ENCODE measurements at regions of chr13 and their contacts with region 1.

Region 1: DNA sequence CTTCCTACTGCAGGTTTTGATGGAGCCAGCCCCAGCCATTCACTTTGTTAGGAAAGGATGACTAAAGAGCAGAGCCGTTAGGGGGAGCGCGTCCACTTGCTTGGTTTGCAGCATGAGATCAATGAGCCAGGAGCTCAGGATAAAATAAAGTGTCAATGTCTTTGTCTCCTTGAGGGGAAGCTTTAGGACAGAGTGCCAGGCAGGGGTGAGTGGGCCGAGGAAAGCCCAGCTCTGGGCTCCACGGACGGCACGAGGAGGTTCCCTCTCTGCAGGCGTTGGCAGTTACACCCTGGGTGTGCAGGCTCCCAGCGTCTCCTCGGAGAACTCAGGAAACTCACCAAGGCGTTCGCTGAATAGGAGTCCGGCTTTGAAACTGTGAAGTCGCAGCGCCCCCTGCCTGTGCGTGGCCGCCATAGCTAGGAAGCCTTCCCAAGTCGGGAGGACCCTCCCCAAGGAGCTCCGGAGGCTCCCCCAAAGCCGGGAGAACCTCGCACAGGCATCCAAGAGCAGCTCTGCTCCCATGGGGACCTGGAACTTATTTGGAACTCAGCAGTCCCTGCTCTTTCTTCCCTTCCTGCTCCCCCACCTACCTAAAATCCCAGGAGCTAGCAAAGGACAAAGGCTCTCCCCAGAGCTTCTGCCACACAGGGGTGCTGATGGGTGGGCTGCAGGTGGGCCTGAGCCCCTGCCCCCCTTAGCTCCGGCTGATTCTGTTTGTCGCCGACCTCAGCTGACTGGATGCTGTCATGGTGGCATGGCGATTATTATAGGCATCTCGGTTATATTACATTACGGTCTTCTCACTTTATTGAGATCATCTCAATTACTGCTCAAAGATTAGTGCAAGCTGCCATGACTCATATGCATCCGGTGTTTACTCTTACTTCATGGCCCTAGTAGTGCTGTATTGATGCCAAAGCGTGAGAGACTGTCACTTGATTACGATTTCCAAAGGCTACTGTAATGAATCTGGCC is 34.4 kb downstream of the GSX1 start:
- DNase-seq: peak; percentile 78 to 99
- H3K4me3 ChIP-seq: peak overlapping the region in 3 of 4 experiments; percentile 31 to 52 (median 40); a peak in 4 of 8 replicates
- H3K27ac ChIP-seq: no peak overlapping the region
- H3K4me1 ChIP-seq: peaks cover 7 to 19% (median 11%) of the 10 kb centered on the region in 4 experiments; a peak in 6 of 7 replicates
- H3K27me3 ChIP-seq: peaks cover 47 to 91% (median 78%) of the 10 kb centered on the region in 4 experiments
- CTCF ChIP-seq: peak; percentile 77 to 96 (median 95)
- EP300 ChIP-seq: no peak
- POLR2A ChIP-seq: no peak
- RAD21 ChIP-seq: peak; percentile 94 to 96

Region 2: GRCh38 chr13:27264181-27264580 is 562.5 kb before region 1 on chr13:
- CTCF ChIA-PET with region 1: no interaction called
- POLR2A ChIA-PET with region 1: no interaction called
- DNase-seq: no peak
- H3K4me3 ChIP-seq: no peak overlapping the region
- H3K27ac ChIP-seq: no peak overlapping the region
- H3K4me1 ChIP-seq: peaks cover 0 to 2% (median under 1%) of the 10 kb centered on the region in 4 experiments; a peak in 5 of 7 replicates
- H3K27me3 ChIP-seq: peaks cover 0 to 1% (median 0%) of the 10 kb centered on the region in 4 experiments; a peak in 3 of 7 replicates
- CTCF ChIP-seq: no peak
- EP300 ChIP-seq: no peak
- POLR2A ChIP-seq: no peak
- RAD21 ChIP-seq: no peak

Region 3: DNA sequence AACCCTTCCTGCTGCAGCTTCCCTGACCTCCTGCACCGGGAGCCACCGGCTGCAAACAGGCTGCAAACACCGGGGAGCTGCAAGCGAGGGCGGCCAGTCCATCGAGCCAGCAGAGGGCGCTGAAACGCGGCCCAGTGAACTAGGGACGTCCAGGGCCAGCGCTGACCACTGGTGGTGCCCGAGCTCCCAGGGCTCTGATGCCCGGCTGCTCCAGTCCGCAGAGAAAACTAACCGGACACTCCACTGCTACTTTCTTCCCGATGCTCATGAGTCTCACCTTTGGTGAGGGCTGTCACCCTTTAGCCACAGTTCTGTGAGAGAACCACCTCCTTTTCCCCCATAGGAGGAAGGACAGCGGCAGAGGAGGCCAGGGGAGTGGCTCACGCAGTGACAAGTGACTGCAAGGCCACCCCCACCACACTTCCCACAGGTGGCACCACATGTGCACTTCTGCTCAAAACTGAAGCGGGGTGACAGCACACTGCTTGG is 293.5 kb before region 1 on chr13:
- CTCF ChIA-PET with region 1: interaction called, 16 read pairs
- POLR2A ChIA-PET with region 1: no interaction called
- DNase-seq: peak; percentile 21 to 94
- H3K4me3 ChIP-seq: no peak overlapping the region
- H3K27ac ChIP-seq: no peak overlapping the region
- H3K4me1 ChIP-seq: no peaks in the 10 kb centered on the region
- H3K27me3 ChIP-seq: no peaks in the 10 kb centered on the region
- CTCF ChIP-seq: peak; percentile 94 to 99 (median 97)
- EP300 ChIP-seq: no peak
- POLR2A ChIP-seq: no peak
- RAD21 ChIP-seq: peak; percentile 76 to 88

Region 4: GRCh38 chr13:27728271-27728670 is 98.4 kb before region 1 on chr13:
- CTCF ChIA-PET with region 1: interaction called, 64 read pairs
- POLR2A ChIA-PET with region 1: no interaction called
- DNase-seq: no peak
- H3K4me3 ChIP-seq: no peak overlapping the region
- H3K27ac ChIP-seq: no peak overlapping the region
- H3K4me1 ChIP-seq: no peaks in the 10 kb centered on the region
- H3K27me3 ChIP-seq: no peaks in the 10 kb centered on the region
- CTCF ChIP-seq: peak; percentile 30 to 44 (median 42); a peak in 3 of 4 replicates
- EP300 ChIP-seq: no peak
- POLR2A ChIP-seq: no peak
- RAD21 ChIP-seq: peak; percentile 63 to 67

Region 5: GRCh38 chr13:27783111-27783510 is 43.6 kb before region 1 on chr13:
- CTCF ChIA-PET with region 1: interaction called, 154 read pairs
- POLR2A ChIA-PET with region 1: no interaction called
- DNase-seq: no peak
- H3K4me3 ChIP-seq: no peak overlapping the region
- H3K27ac ChIP-seq: no peak overlapping the region
- H3K4me1 ChIP-seq: peaks cover 0 to 7% (median 1%) of the 10 kb centered on the region in 4 experiments; a peak in 5 of 7 replicates
- H3K27me3 ChIP-seq: peaks cover 9 to 25% (median 12%) of the 10 kb centered on the region in 4 experiments
- CTCF ChIP-seq: peak; percentile 42 to 66 (median 64)
- EP300 ChIP-seq: no peak
- POLR2A ChIP-seq: no peak
- RAD21 ChIP-seq: peak; percentile 64 to 73

Region 6: DNA sequence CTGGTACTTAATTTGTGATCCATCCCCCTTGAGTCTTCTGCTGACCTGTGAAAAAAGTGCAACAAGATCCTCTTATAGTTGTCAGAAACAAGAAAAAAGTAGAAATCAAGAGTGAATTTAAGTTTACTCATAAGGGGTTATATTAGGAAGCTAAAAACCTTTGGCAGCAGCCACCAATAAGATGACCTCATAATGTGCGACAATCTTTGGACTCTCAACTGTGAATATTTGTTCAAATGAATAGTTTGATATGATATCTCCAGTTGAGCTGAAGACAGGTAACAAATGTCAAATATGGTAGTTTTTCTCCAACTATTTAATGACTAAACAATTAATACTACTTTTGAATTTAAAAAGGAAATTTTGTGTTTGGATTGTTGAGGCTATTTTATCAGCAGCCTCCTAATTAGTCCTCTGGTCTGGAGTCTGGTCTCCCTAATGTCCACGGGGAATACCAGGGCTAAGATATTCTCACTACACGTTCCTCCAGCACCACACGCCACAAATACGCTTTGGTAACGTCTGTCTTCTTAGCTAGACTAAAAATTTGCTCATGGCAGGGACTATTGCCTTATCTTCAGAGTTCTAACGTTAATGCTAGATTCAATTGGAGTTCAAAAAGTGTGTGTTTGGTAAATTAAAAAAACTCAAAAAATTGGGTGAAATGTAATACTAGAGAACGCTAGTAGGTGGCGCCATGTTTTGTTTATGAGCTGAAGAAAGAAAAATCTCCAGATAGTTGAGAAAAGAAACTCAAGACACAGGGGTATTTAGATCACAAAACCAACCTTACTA is 42.2 kb after region 1 on chr13:
- CTCF ChIA-PET with region 1: interaction called, 17 read pairs
- POLR2A ChIA-PET with region 1: no interaction called
- DNase-seq: no peak
- H3K4me3 ChIP-seq: no peak overlapping the region
- H3K27ac ChIP-seq: no peak overlapping the region
- H3K4me1 ChIP-seq: no peaks in the 10 kb centered on the region
- H3K27me3 ChIP-seq: no peaks in the 10 kb centered on the region; a peak in 1 of 7 replicates
- CTCF ChIP-seq: peak in 2 of 3 experiments; percentile 33 to 41; a peak in 2 of 4 replicates
- EP300 ChIP-seq: no peak
- POLR2A ChIP-seq: no peak
- RAD21 ChIP-seq: peak; percentile 34 to 39; a peak in 3 of 4 replicates

Region 7: GRCh38 chr13:27960362-27961226 is 133.9 kb after region 1 on chr13:
- CTCF ChIA-PET with region 1: interaction called, 150 read pairs
- POLR2A ChIA-PET with region 1: interaction called, 3 read pairs
- DNase-seq: peak in 1 of 2 experiments; percentile 95
- H3K4me3 ChIP-seq: peak overlapping the region in 3 of 4 experiments; percentile 11 to 49 (median 26); a peak in 4 of 8 replicates
- H3K27ac ChIP-seq: no peak overlapping the region
- H3K4me1 ChIP-seq: peaks cover 7 to 20% (median 12%) of the 10 kb centered on the region in 4 experiments; a peak in 6 of 7 replicates
- H3K27me3 ChIP-seq: peaks cover 90 to 100% (median 98%) of the 10 kb centered on the region in 4 experiments
- CTCF ChIP-seq: peak in 2 of 3 experiments; percentile 81 to 83; a peak in 3 of 4 replicates
- EP300 ChIP-seq: no peak
- POLR2A ChIP-seq: no peak
- RAD21 ChIP-seq: peak; percentile 74 to 85

Measured in H1 (cell line).